Aorta (tissue), 5 donors: ENCODE measurements at regions of chr2 and their contacts with region 1.

Region 1: DNA sequence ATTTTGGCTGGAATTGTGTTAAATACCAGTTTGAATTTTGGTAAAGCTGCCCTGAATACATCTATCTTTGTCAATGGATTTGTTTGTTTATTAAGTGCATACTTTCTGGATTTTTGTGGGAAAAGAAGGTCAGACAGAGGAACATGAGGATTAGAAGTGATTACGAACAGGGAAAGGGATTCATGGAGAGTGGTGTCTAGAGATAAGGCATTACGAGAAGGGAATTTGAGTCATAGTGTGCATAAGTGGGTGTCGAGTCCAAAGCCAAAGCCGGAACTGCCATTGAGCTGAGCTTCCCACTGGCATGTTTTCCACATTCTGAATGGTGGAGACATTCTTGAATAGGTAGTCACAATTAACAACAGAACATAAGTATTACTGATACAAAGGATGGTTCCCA is 68.9 kb upstream of the EFEMP1 start:
- DNase-seq: peak; percentile 71 to 75
- ATAC-seq: peak; percentile 77
- H3K4me3 ChIP-seq: no peak overlapping the region
- H3K27ac ChIP-seq: peak overlapping the region in 1 of 2 donors; percentile 25
- H3K4me1 ChIP-seq: peaks cover 2 to 5% of the 10 kb centered on the region in 2 donors
- H3K27me3 ChIP-seq: no peaks in the 10 kb centered on the region

Region 2: GRCh38 chr2:55827467-55828254 is 164.8 kb before region 1 on chr2:
- intact Hi-C with region 1: no loop called
- DNase-seq: no peak
- ATAC-seq: no peak
- H3K4me3 ChIP-seq: no peak overlapping the region
- H3K27ac ChIP-seq: no peak overlapping the region
- H3K4me1 ChIP-seq: no peaks in the 10 kb centered on the region
- H3K27me3 ChIP-seq: no peaks in the 10 kb centered on the region

Region 3: DNA sequence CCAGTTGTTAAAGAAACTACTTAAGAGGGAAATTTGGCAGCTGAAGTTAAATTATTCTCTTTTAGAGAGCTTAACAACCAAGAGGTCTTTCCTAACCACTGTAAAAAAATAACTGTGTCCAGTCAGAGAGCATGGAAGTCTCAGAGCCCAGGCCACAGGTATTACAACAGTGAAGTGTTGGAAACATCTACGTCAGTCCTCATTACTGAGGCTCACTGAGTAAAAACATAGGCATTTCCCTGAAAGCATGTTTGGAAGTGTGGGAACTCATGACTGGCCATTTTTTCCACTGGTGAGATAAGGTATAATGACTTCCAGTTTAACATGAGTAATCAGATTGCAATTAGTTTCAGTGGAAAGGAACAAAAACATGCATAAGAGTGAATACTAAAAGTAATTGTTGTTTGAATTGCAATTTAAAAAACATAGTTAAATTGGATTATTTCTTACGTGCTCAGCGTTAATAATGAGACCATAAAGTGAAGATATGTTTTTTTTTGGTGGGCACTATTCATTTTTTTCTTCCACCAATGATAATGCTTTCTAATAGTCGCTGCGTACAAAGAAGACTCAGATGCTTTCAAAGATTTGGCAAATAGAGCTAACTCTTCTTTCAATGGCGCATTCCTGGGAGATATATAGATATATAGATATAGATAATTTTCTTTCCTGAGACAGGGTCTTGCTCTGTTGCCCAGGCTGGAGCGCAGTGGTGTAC is 129.6 kb before region 1 on chr2:
- intact Hi-C with region 1: loop called in 1 of 2 experiments (anchors 5 kb)
- DNase-seq: peak in 1 of 2 donors; percentile 59
- ATAC-seq: peak; percentile 91
- H3K4me3 ChIP-seq: no peak overlapping the region
- H3K27ac ChIP-seq: peak overlapping the region; percentile 95 to 98
- H3K4me1 ChIP-seq: peaks cover 8 to 9% of the 10 kb centered on the region in 2 donors
- H3K27me3 ChIP-seq: no peaks in the 10 kb centered on the region

Region 4: DNA sequence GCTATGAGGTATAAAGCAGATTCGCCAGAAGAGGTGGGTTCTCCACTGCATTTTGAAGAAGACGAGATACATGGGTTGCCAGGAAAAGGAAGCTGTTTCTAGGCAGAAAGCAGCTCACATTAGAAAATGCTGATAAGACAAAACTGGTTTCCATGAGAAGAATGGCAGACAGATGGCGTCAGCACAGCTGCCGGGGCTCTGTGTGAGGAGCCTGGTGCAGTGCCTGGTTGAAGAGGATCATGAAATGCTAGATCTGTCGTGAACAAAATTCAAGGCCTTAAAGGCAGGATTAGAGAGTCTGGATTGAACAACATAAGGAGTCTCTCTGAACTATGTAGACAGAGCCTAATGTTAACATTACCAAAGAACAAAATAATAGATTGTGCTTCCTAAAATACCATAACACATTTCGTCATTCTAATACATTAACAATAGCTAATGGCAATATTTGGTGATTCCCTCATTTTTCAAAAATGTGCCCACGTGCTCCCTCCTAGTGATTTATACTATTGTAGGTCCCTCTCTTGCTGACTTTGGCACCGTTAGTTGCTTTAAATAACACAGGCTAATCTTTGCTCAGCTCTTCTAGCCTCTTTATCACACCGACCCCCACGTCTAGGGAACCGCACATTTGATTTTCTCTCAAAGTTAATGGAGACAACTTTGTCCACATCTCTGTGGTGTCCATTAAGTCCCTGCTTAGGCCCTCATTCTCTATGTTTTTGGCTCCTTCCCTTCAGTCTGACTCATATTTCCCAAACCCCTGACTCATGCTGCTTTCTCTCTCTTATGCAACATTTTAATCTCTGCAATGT is 107.1 kb before region 1 on chr2:
- intact Hi-C with region 1: loop called (anchors 5 to 10 kb)
- DNase-seq: peak in 1 of 2 donors; percentile 67
- ATAC-seq: peak; percentile 84
- H3K4me3 ChIP-seq: no peak overlapping the region
- H3K27ac ChIP-seq: peak overlapping the region; percentile 93 to 94
- H3K4me1 ChIP-seq: peaks cover 0 to 10% of the 10 kb centered on the region in 2 donors
- H3K27me3 ChIP-seq: no peaks in the 10 kb centered on the region

Region 5: DNA sequence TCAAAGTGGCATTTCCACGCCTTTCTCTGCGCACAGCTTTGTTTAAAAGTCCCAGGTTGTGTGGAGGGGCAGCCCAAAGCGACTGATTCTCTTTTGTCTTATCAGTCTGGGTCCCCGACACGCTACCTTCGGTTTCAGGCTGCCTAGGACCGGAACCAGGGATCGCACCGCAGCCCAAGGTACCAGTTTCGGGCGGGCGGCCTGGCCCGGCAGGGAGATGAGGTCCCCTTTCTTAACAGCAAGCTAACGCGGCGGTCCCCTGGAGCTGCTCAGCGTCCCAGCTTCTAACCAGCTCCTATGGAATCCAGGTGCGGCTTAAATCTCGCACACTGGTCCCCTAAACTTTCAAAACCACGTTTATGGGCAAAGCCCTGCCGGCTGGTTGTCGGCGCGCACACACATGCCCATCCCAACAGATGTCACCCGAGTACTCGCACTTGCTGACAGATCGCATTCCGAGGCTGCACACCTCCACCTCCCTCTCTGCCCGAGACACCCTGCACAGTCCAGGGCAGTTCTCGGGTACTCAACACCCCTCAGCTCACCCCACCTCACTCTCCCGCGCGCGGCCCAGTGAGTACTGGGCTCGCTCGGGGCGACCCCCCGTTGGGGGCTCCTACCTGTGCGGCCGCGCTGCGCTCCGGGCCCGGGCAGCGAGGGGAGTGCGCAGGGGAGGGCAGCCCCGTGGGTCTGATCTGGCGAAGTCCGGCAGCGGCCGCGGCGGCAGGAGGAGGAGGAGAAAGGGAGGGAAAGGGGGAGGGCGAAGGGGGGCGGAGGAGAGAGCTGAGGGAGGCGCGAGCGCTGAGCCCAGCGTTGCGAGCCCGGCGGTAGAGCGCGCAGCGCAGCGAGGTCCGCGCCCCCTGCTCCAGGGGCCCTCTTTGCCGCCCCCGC is 69.1 kb before region 1 on chr2 and contains the start of gene EFEMP1:
- intact Hi-C with region 1: loop called in 1 of 2 experiments (anchors 10 kb)
- DNase-seq: peak; percentile 89 to 94
- ATAC-seq: peak; percentile 94
- H3K4me3 ChIP-seq: peak within 1 kb of the TSS; percentile 51 to 84
- H3K27ac ChIP-seq: peak within 1 kb of the TSS in 1 of 2 donors; percentile 54
- H3K4me1 ChIP-seq: peaks cover 0 to 4% of the 10 kb centered on the region in 2 donors
- H3K27me3 ChIP-seq: no peaks in the 10 kb centered on the region
- total RNA-seq, gene EFEMP1: 793 to 989 TPM